B cell (primary cell): ENCODE measurements at regions of chr5 and their contacts with region 1.

Region 1: DNA sequence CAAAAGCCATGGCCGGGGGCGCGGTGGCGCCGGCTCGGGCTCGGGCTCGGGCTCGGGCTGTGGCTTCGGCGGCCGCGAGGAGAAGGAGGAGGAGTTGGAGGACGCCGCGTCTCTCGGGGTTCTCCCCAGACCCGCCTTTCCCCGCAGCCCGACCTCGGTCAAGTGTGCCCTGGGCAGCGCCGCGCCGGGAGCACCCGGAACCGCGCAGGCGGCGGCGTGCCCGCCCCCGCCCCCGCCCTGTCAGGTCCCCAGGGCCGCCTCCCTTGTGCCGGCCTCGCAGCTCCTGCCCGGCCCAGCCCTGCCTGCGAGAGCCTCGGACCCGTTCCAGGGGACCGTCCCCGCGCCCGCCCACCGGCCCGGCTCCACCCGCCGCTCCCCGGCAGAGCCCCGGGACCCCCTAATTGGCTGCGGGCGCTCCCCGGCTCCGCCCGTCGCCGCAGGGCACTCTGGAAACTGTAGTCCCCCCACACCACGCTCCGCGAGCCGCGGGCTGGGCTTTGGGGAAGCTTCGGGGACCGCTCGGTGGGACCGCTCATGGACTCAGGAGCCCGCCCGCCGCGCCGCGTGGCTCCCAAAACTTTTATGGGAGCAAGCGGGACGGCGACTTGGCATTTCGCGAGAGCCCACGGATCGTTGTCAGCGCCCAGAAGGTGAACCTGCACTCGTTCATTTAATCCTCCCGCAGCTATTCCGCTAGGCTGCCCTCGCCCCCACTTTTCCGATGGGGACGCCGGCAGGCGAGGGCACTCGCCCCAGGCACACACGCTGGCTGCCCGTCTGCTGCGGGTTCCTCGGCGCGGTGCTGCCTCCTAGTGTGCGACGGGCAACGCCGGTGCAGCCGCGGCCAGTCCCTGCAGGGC is at the start of gene STK10:
- DNase-seq: peak; percentile 94
- ATAC-seq: peak; percentile 81
- H3K4me3 ChIP-seq: peak within 1 kb of the TSS; percentile 88 to 99 (median 98)
- H3K4me3 Mint-ChIP-seq: peak within 1 kb of the TSS; percentile 100
- H3K27ac ChIP-seq: peak within 1 kb of the TSS; percentile 74 to 89
- H3K27ac Mint-ChIP-seq: peak within 1 kb of the TSS; percentile 99
- H3K4me1 ChIP-seq: peaks cover 35 to 48% of the 10 kb centered on the region in 2 donors
- H3K4me1 Mint-ChIP-seq: peaks cover 39% of the 10 kb centered on the region
- H3K27me3 ChIP-seq: no peaks in the 10 kb centered on the region
- H3K27me3 Mint-ChIP-seq: no peaks in the 10 kb centered on the region
- CTCF ChIP-seq: peak; percentile 87
- total RNA-seq, gene STK10: 253 and 261 TPM in 2 replicates

Region 2: GRCh38 chr5:171913987-171914273 is 274.3 kb before region 1 on chr5:
- CTCF ChIA-PET with region 1: interaction called, 15 read pairs
- POLR2A ChIA-PET with region 1: no interaction called
- intact Hi-C with region 1: loop called (anchors 5 kb)
- DNase-seq: no peak
- ATAC-seq: no peak
- H3K4me3 ChIP-seq: no peak overlapping the region
- H3K4me3 Mint-ChIP-seq: no peak overlapping the region
- H3K27ac ChIP-seq: peak overlapping the region in 1 of 2 donors; percentile 68
- H3K27ac Mint-ChIP-seq: peak overlapping the region; percentile 70
- H3K4me1 ChIP-seq: peaks cover 19 to 36% of the 10 kb centered on the region in 2 donors
- H3K4me1 Mint-ChIP-seq: peaks cover 65% of the 10 kb centered on the region
- H3K27me3 ChIP-seq: no peaks in the 10 kb centered on the region
- H3K27me3 Mint-ChIP-seq: no peaks in the 10 kb centered on the region
- CTCF ChIP-seq: no peak

Region 3: DNA sequence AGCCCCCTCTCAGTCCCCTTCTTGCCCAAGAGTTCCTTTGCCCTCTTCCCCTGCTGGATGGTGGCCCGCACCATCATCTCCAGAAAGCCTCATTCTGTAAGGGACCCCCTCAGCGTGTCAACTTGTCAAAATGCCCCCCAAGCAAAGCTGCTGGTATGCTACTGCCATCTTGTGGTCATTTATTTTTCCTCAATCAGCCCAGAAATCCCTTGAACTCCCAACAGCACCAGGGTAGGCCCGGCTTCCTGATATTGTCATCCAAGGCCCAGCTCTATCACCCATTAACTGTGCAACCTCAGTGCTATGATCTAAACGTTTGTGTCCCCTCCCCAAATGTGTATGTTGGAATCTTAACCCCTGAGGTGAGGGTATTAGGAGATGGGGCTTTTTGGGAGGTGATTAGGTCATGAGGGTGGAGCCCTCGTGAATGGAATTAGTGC is 128.6 kb before region 1 on chr5:
- CTCF ChIA-PET with region 1: interaction called, 12 read pairs
- POLR2A ChIA-PET with region 1: no interaction called
- intact Hi-C with region 1: no loop called
- DNase-seq: peak; percentile 46
- ATAC-seq: no peak
- H3K4me3 ChIP-seq: no peak overlapping the region
- H3K4me3 Mint-ChIP-seq: no peak overlapping the region
- H3K27ac ChIP-seq: no peak overlapping the region
- H3K27ac Mint-ChIP-seq: no peak overlapping the region
- H3K4me1 ChIP-seq: no peaks in the 10 kb centered on the region
- H3K4me1 Mint-ChIP-seq: no peaks in the 10 kb centered on the region
- H3K27me3 ChIP-seq: no peaks in the 10 kb centered on the region
- H3K27me3 Mint-ChIP-seq: no peaks in the 10 kb centered on the region
- CTCF ChIP-seq: peak; percentile 67

Region 4: DNA sequence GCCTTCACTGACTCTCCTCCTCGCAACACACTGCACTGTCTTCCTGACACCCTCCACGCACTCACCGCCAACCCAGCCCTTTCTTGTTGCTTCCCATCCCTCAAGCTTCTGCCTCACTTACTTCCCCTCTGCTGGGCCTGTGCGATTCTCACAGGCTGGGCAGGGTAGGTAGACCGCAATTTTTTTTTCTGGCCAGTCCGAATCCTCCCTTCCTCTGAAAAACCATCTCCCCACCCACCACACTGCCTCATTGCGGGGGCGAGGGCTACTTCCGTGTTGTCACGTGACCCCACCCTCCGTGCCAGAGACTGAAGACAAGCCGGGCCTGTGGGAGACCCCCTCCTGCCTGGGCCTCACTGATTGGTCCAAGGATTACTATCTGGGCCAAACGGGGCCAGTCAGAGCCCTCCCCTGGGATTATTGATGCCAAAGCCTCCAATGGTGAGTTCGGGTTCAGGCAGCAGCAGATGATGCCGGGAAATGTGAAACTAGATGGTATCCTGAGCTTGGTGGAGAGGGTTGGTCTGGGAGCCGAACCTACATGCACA is 73.3 kb before region 1 on chr5:
- CTCF ChIA-PET with region 1: interaction called, 245 read pairs
- POLR2A ChIA-PET with region 1: interaction called, 43 read pairs
- intact Hi-C with region 1: loop called (anchors 1 kb)
- DNase-seq: peak; percentile 88
- ATAC-seq: peak; percentile 31
- H3K4me3 ChIP-seq: peak overlapping the region in 4 of 5 experiments; percentile 9 to 38 (median 22)
- H3K4me3 Mint-ChIP-seq: peak overlapping the region; percentile 81
- H3K27ac ChIP-seq: peak overlapping the region; percentile 86 to 89
- H3K27ac Mint-ChIP-seq: peak overlapping the region; percentile 94
- H3K4me1 ChIP-seq: peaks cover 49 to 58% of the 10 kb centered on the region in 2 donors
- H3K4me1 Mint-ChIP-seq: peaks cover 61% of the 10 kb centered on the region
- H3K27me3 ChIP-seq: no peaks in the 10 kb centered on the region
- H3K27me3 Mint-ChIP-seq: no peaks in the 10 kb centered on the region
- CTCF ChIP-seq: no peak

Region 5: DNA sequence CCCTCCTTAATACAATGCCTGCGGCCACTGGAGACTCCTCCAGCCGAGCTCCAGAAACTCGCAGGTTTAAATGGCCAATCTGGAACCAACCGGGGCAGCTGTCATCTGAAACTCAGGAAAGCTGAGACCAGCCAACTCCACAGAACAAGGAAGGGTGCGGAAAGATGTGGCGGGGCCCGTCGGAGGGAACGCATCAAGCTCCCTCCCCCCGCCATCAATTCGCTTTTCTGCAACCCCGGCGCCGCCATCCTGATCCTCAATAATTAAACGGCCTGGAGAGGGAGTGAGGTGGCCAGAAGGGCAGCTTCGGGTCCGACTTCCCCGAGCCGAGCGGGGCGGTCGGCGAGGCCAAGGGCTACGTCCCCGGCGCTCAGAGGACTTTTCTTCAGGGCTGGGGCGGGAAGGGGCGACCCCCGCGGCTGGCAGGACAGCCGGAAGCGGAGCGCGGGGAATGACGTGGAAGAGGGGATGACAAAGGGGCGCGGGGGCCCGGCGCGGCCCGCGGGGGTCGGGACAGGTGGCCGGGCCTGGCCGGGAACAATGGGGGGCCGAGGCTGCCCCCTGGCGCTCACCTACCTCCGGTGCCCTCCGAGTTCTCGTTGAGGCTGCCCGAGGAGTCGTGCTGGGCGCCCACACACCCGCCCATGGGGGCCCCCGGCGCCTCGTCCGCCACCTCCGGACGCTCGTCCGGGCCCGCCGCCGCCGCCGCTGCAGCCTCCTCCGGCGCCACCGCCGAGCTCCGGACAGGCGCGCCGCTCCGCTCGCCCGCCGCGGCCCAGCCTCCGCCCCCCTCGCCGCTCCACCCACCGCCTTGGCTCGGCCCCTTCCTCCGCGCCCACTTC is 95.0 kb after region 1 on chr5 and contains the start of gene UBTD2:
- CTCF ChIA-PET with region 1: interaction called, 10 read pairs
- POLR2A ChIA-PET with region 1: interaction called, 5 read pairs
- intact Hi-C with region 1: loop called (anchors 1 kb)
- DNase-seq: peak; percentile 91
- ATAC-seq: peak; percentile 84
- H3K4me3 ChIP-seq: peak within 1 kb of the TSS; percentile 38 to 87 (median 79)
- H3K4me3 Mint-ChIP-seq: peak within 1 kb of the TSS; percentile 93
- H3K27ac ChIP-seq: peak within 1 kb of the TSS in 1 of 2 donors; percentile 74
- H3K27ac Mint-ChIP-seq: peak within 1 kb of the TSS; percentile 83
- H3K4me1 ChIP-seq: peaks cover 16 to 17% of the 10 kb centered on the region in 2 donors
- H3K4me1 Mint-ChIP-seq: peaks cover 20% of the 10 kb centered on the region
- H3K27me3 ChIP-seq: no peaks in the 10 kb centered on the region
- H3K27me3 Mint-ChIP-seq: no peaks in the 10 kb centered on the region
- CTCF ChIP-seq: peak; percentile 72
- total RNA-seq, gene UBTD2: 9.2 and 10.6 TPM in 2 replicates

Region 6: DNA sequence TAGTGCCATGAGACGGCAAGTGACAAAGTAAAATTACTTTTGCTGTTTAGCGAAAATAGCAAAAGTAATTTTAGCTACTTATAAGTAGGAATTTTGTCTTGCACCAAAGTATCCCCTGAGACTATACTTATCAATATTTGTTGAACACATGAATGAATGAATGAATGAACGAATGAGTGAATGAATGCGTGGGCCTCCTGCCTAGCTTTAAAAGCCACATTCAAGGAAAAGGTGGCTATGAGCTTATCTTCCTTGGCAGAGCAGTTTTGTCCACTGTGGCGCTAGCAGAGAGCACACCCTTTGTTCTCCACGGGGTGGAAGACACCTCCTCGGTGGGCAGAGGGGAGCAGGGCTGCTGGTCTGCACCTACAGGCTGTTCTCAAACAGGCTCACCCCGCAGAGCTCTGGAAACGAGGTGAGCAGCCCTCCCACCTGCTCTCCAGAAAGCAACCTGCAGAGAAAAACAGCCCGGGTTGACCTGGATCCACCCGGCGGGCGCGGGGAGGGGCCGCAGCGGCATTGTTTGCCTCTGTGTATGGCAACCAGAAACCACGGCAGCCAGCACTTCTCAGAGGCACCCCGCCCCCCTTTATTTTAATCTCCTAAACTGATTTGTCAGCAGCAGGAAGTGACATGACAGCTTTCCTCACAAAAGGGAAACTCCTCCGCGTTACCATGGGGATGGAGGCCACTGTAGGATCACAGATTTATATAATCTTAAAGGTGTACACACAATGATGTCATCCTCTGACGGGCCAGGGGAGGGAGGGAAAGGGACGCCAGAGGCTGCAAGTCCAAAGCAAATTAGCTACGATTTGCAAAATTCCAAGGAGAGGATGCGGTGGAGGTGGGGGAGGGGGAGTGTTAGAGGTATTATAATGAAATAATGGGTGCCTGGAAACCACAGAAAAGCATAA is 576.8 kb after region 1 on chr5:
- CTCF ChIA-PET with region 1: no interaction called
- POLR2A ChIA-PET with region 1: no interaction called
- intact Hi-C with region 1: loop called (anchors 2 kb)
- DNase-seq: peak; percentile 99
- ATAC-seq: peak; percentile 78
- H3K4me3 ChIP-seq: peak overlapping the region; percentile 27 to 74 (median 52)
- H3K4me3 Mint-ChIP-seq: peak overlapping the region; percentile 83
- H3K27ac ChIP-seq: peak overlapping the region; percentile 92 to 94
- H3K27ac Mint-ChIP-seq: peak overlapping the region; percentile 94
- H3K4me1 ChIP-seq: peaks cover 33 to 42% of the 10 kb centered on the region in 2 donors
- H3K4me1 Mint-ChIP-seq: peaks cover 59% of the 10 kb centered on the region
- H3K27me3 ChIP-seq: no peaks in the 10 kb centered on the region
- H3K27me3 Mint-ChIP-seq: no peaks in the 10 kb centered on the region
- CTCF ChIP-seq: no peak